Aorta (tissue), 5 donors: ENCODE measurements at regions of chr4 and their contacts with region 1.

Region 1: GRCh38 chr4:158856852-158857251 is 88.0 kb downstream of the FNIP2 start:
- DNase-seq: no peak
- ATAC-seq: peak; percentile 73
- H3K4me3 ChIP-seq: no peak overlapping the region
- H3K27ac ChIP-seq: no peak overlapping the region
- H3K4me1 ChIP-seq: no peaks in the 10 kb centered on the region
- H3K27me3 ChIP-seq: no peaks in the 10 kb centered on the region

Region 2: DNA sequence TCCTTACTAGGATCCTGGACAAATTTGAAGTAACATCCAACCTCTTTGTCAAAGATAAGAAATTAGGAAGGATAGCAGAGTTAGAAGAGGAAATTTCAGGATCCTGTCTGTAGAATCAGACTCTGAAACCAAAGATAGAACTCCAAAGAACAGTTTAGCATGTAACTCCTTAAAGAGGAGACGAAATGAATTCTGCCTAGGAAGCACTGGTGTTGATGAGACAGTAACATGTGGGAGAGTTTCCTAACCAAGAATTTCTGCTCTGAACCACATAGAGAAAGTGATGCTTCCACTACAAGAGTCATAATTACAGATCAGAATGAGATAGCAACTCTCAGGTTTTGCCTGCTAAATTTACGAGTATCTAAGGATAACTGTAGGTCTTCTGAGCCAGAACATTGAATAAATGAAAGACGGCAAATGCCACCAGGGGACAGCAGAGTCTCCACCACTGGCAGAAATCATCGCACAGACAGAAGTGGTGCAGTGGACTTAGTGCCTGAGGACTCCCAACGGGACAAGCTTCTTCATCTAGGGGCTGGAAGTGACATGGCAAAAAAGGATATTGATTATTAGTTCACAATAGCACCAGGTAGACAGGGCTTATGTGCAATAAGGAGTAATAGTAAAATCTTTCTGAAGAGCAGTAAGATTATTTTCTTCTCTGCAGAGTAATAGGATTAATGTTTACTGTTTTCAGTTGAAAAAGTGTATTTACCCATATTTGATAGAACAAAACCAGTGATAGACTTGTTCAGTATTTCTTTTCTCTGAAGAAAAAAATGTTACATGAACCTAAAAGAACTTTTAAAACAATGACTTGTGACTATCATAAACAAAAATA is 126.9 kb before region 1 on chr4:
- intact Hi-C with region 1: no loop called
- DNase-seq: peak; percentile 73 to 77
- ATAC-seq: peak; percentile 87
- H3K4me3 ChIP-seq: no peak overlapping the region
- H3K27ac ChIP-seq: no peak overlapping the region
- H3K4me1 ChIP-seq: no peaks in the 10 kb centered on the region
- H3K27me3 ChIP-seq: no peaks in the 10 kb centered on the region

Region 3: DNA sequence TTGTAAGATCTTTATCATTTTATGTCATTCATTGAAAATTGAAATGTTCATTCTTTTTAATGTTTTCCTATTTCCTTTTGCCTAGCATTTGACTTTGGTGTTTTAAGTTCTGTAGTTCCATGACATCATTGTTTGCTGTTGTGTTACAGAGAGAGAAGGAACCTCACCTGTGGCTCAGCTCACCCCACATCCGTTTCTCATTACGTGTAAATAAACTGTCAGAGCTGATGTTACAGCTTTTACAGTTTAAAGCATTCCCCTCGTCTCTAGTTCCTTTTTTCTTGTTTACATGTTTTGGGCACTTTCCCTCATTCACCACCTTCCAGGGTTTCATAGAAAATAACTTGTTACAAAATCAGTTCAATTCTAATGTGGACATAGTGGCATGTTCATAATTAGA is 49.2 kb after region 1 on chr4:
- intact Hi-C with region 1: no loop called
- DNase-seq: no peak
- ATAC-seq: no peak
- H3K4me3 ChIP-seq: no peak overlapping the region
- H3K27ac ChIP-seq: no peak overlapping the region
- H3K4me1 ChIP-seq: no peaks in the 10 kb centered on the region
- H3K27me3 ChIP-seq: no peaks in the 10 kb centered on the region

Region 4: GRCh38 chr4:159201168-159201567 is 344.3 kb after region 1 on chr4:
- intact Hi-C with region 1: loop called (anchors 5 to 10 kb)
- DNase-seq: no peak
- ATAC-seq: no peak
- H3K4me3 ChIP-seq: no peak overlapping the region
- H3K27ac ChIP-seq: no peak overlapping the region
- H3K4me1 ChIP-seq: peaks cover 0 to 8% of the 10 kb centered on the region in 2 donors
- H3K27me3 ChIP-seq: no peaks in the 10 kb centered on the region

Region 5: GRCh38 chr4:159206427-159206871 is 349.6 kb after region 1 on chr4:
- intact Hi-C with region 1: loop called (anchors 5 to 10 kb)
- DNase-seq: no peak
- ATAC-seq: no peak
- H3K4me3 ChIP-seq: no peak overlapping the region
- H3K27ac ChIP-seq: no peak overlapping the region
- H3K4me1 ChIP-seq: peaks cover 0 to 8% of the 10 kb centered on the region in 2 donors
- H3K27me3 ChIP-seq: no peaks in the 10 kb centered on the region

Region 6: DNA sequence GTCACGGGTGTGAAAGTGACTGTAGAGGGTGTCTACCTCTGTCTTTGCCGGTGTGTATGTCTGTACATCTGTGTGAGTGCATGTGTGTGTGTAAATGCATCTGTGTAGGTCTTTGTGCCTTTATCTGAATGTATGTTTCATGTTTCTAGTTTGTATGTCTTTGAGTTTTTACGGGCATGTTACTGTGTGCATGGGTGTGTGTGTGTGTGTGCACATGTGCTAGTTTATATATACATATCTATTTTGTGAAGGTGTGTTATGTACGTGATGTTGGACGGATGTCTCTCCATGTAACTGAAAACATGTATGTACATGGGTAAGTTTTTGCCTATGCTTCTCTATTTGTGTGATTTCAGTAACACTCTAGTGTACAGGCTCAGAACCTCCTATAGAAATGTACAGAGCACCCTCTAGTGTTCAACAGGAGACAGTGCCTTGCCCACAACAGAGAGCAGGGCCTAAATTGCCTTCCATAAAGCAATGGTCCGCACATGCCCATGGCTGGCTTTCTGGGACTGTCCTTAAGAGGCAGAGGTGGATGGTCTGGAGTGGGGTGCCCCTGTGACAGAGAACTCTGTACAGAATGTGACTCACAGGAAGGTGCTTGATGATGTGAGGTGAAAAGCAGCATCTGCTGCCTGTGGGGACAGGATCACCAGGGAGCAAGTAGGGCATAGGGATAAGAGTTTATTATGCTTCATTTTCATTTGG is 589.6 kb after region 1 on chr4:
- intact Hi-C with region 1: loop called in 1 of 2 experiments (anchors 10 kb)
- DNase-seq: no peak
- ATAC-seq: peak; percentile 94
- H3K4me3 ChIP-seq: no peak overlapping the region
- H3K27ac ChIP-seq: no peak overlapping the region
- H3K4me1 ChIP-seq: no peaks in the 10 kb centered on the region
- H3K27me3 ChIP-seq: no peaks in the 10 kb centered on the region